ENCODE measurements at regions of chr4 and their contacts with region 1.

Region 1: GRCh38 chr4:122602277-122603142 is 18.4 kb downstream of the IL21 start:
- DNase-seq: peak in 3 of 14 experiments; percentile 41 to 61 (median 53)
- ATAC-seq: peak; percentile 78
- H3K4me3 ChIP-seq: no peak overlapping the region
- H3K4me3 Mint-ChIP-seq: no peak overlapping the region
- H3K27ac ChIP-seq: no peak overlapping the region
- H3K27ac Mint-ChIP-seq: no peak overlapping the region
- H3K4me1 ChIP-seq: no peaks in the 10 kb centered on the region
- H3K4me1 Mint-ChIP-seq: peaks cover 8% of the 10 kb centered on the region
- H3K27me3 ChIP-seq: no peaks in the 10 kb centered on the region
- H3K27me3 Mint-ChIP-seq: peaks cover 17% of the 10 kb centered on the region
- CTCF ChIP-seq: peak; percentile 41

Region 2: DNA sequence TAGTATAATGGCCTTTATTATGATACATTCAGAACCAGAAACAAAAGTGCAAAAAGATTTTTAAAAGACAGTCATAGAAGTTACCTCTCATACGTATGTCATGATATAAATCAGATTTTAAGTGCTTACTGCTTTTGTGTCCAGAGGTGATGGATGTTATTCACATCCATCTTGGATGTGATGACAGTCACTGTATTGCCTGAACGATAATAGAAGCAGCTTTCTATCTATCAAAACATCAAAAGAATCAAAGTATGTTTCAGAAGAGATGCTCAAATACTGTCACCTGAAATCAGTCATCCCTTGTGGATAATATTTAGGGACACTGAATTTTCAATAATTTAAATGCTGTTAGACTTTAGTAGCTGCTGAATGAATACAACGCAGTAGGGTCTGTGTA is 45.1 kb after region 1 on chr4:
- CTCF ChIA-PET with region 1: no interaction called
- POLR2A ChIA-PET with region 1: no interaction called
- intact Hi-C with region 1: loop called in 1 of 2 experiments (anchors 5 kb)
- DNase-seq: no peak
- ATAC-seq: no peak
- H3K4me3 ChIP-seq: no peak overlapping the region
- H3K4me3 Mint-ChIP-seq: no peak overlapping the region
- H3K27ac ChIP-seq: no peak overlapping the region
- H3K27ac Mint-ChIP-seq: no peak overlapping the region
- H3K4me1 ChIP-seq: no peaks in the 10 kb centered on the region
- H3K4me1 Mint-ChIP-seq: no peaks in the 10 kb centered on the region
- H3K27me3 ChIP-seq: no peaks in the 10 kb centered on the region
- H3K27me3 Mint-ChIP-seq: no peaks in the 10 kb centered on the region
- CTCF ChIP-seq: no peak

Region 3: GRCh38 chr4:122716825-122717448 is 114.4 kb after region 1 on chr4:
- CTCF ChIA-PET with region 1: interaction called, 6 read pairs
- POLR2A ChIA-PET with region 1: no interaction called
- intact Hi-C with region 1: loop called (anchors 1 to 2 kb)
- DNase-seq: peak; percentile 50 to 82 (median 69)
- ATAC-seq: peak; percentile 96
- H3K4me3 ChIP-seq: no peak overlapping the region
- H3K4me3 Mint-ChIP-seq: no peak overlapping the region
- H3K27ac ChIP-seq: no peak overlapping the region
- H3K27ac Mint-ChIP-seq: no peak overlapping the region
- H3K4me1 ChIP-seq: no peaks in the 10 kb centered on the region
- H3K4me1 Mint-ChIP-seq: peaks cover 17% of the 10 kb centered on the region
- H3K27me3 ChIP-seq: no peaks in the 10 kb centered on the region
- H3K27me3 Mint-ChIP-seq: no peaks in the 10 kb centered on the region
- CTCF ChIP-seq: peak; percentile 83

Region 4: GRCh38 chr4:122914292-122914904 is 311.9 kb after region 1 on chr4:
- CTCF ChIA-PET with region 1: no interaction called
- POLR2A ChIA-PET with region 1: no interaction called
- intact Hi-C with region 1: loop called (anchors 1 to 5 kb)
- DNase-seq: peak in 3 of 14 experiments; percentile 6 to 61 (median 41)
- ATAC-seq: peak; percentile 75
- H3K4me3 ChIP-seq: no peak overlapping the region
- H3K4me3 Mint-ChIP-seq: no peak overlapping the region
- H3K27ac ChIP-seq: no peak overlapping the region
- H3K27ac Mint-ChIP-seq: no peak overlapping the region
- H3K4me1 ChIP-seq: no peaks in the 10 kb centered on the region
- H3K4me1 Mint-ChIP-seq: no peaks in the 10 kb centered on the region
- H3K27me3 ChIP-seq: no peaks in the 10 kb centered on the region
- H3K27me3 Mint-ChIP-seq: no peaks in the 10 kb centered on the region
- CTCF ChIP-seq: peak; percentile 76

Measured in CD4-positive, alpha-beta T cell (primary cell).